Activated CD8-positive, alpha-beta memory T cell treated with anti-CD3 and anti-CD28 coated beads, Interleukin-2, amount 10 ng/mL, durations not matched to agents 7 days and 5 days (primary cell): ENCODE measurements at regions of chr11 and their contacts with region 1.

Region 1: GRCh38 chr11:64204464-64204989 is 2.0 kb upstream of the FERMT3 start:
- DNase-seq: peak; percentile 86
- ATAC-seq: peak; percentile 30
- H3K4me3 Mint-ChIP-seq: peak overlapping the region; percentile 45
- H3K27ac Mint-ChIP-seq: peak overlapping the region; percentile 78
- H3K4me1 Mint-ChIP-seq: peaks cover 45% of the 10 kb centered on the region
- H3K27me3 Mint-ChIP-seq: no peaks in the 10 kb centered on the region

Region 2: DNA sequence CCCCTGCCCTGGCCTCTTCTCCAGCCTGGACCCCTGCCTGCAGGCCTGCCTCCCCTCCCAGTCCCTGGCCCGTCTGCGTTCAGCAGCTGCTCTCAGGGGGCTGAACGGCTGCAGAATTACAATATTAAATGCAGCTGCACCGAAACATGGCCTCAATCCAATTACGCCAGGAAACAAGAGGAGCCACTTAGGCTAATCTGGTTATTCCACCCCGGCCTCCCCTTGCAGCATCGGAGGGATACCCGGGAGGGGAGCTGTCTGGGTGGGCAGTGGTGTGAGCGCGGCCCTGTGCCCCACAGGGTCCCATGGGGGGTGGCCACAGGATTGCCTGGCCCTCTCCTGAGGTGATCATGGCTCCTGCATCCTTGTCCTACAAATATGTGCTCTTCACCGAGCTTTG is 126.2 kb before region 1 on chr11:
- CTCF ChIA-PET with region 1: no interaction called
- DNase-seq: no peak
- ATAC-seq: no peak
- H3K4me3 Mint-ChIP-seq: no peak overlapping the region
- H3K27ac Mint-ChIP-seq: no peak overlapping the region
- H3K4me1 Mint-ChIP-seq: peaks cover 5% of the 10 kb centered on the region
- H3K27me3 Mint-ChIP-seq: no peaks in the 10 kb centered on the region

Region 3: GRCh38 chr11:64225612-64226506 is 21.3 kb after region 1 on chr11 and contains the starts of genes NUDT22 and TRPT1:
- CTCF ChIA-PET with region 1: interaction called, 36 read pairs
- DNase-seq: peak; percentile 96
- ATAC-seq: peak; percentile 71
- H3K4me3 Mint-ChIP-seq: peak within 1 kb of the TSS; percentile 87
- H3K27ac Mint-ChIP-seq: peak within 1 kb of the TSS; percentile 90
- H3K4me1 Mint-ChIP-seq: peaks cover 35% of the 10 kb centered on the region
- H3K27me3 Mint-ChIP-seq: no peaks in the 10 kb centered on the region
- total RNA-seq, gene NUDT22: 83.8 to 84.1 TPM
- total RNA-seq, gene TRPT1: 33.4 to 37.1 TPM

Region 4: DNA sequence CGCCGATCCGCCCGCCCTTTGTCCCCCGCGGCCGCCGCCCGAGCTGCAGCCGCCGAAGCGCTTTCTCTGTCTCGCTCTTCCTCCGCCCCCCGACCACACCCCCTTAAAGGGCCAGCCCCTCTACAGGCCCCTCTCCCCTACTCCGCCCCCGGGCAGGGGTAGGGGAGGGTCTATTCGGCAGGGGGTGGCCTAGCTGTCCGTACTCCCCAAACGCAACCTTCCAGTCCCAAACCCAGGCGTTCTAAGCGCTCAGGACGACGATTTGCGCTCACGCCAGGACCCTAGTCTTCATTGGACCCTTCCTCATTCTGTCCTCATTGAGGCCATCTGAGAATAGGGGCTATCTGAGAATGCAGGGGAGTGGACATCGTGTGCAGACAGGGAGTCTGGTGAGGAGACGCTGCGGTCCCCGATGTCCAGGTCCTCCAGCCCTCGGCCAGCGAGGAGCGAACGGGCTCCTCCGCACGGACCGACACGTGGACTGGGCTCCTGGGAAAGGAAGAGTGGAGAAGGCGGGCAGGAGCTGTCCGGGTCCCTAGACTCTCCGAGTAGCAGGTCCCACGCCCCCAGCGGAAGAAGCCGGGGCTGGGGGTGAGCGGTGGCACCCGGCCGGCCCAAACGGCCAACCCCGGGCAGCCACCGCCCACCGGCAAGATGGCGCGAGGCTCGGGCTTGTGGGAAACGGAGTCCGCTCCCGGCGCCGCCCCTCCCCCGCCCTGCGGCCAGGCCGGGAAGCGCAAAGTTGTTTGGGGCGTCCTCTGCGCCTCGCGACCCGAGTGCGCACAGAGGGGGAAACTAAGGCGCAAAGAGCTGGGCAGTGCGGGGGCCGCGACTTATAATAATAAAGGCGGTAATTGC is 42.6 kb after region 1 on chr11 and contains the start of gene PPP1R14B:
- CTCF ChIA-PET with region 1: interaction called, 52 read pairs
- DNase-seq: peak; percentile 87
- ATAC-seq: peak; percentile 65
- H3K4me3 Mint-ChIP-seq: peak within 1 kb of the TSS; percentile 83
- H3K27ac Mint-ChIP-seq: peak within 1 kb of the TSS; percentile 90
- H3K4me1 Mint-ChIP-seq: peaks cover 39% of the 10 kb centered on the region
- H3K27me3 Mint-ChIP-seq: no peaks in the 10 kb centered on the region
- total RNA-seq, gene PPP1R14B: 142 to 177 TPM

Region 5: GRCh38 chr11:64284048-64284961 is 79.8 kb after region 1 on chr11 and contains the start of gene BAD:
- CTCF ChIA-PET with region 1: interaction called, 14 read pairs
- DNase-seq: peak; percentile 96
- ATAC-seq: peak; percentile 85
- H3K4me3 Mint-ChIP-seq: peak within 1 kb of the TSS; percentile 79
- H3K27ac Mint-ChIP-seq: peak within 1 kb of the TSS; percentile 89
- H3K4me1 Mint-ChIP-seq: peaks cover 18% of the 10 kb centered on the region
- H3K27me3 Mint-ChIP-seq: no peaks in the 10 kb centered on the region
- total RNA-seq, gene BAD: 35.6 to 36.1 TPM